Posterior vena cava (tissue), 2 donors: ENCODE measurements at regions of chr10 and their contacts with region 1.

Region 1: DNA sequence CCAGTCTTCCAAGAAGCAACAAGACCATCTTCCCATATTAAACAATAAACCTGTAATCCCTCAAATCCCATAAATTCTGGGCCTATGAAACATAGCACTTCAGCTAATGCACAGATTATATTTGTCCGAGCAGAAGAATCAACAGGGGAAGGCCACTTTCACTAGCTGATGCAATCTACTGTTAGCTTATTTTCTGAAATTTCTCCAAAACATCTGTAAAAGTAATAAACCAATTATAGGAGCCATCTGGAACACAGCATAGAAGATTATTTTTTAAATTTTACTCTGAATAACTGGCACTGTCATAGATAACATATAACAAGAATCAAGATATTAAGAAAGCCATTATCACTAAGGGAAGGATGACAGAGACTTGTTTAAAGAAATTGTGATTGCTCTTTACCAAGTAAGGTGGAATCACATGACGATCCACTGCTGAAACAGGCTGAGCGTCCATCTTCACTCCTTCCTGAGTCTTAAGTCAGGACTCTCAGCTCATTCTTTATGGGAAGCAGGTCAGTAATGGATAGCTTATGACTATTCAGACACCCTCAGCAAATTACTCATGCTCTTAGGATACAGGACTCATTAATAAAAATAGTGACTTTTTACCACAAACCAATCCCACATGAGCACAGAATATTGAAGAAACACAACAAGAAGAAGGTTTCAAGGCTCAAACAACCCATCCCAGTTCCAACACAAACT is 719.5 kb downstream of the XPNPEP1 start:
- DNase-seq: no peak

Region 2: DNA sequence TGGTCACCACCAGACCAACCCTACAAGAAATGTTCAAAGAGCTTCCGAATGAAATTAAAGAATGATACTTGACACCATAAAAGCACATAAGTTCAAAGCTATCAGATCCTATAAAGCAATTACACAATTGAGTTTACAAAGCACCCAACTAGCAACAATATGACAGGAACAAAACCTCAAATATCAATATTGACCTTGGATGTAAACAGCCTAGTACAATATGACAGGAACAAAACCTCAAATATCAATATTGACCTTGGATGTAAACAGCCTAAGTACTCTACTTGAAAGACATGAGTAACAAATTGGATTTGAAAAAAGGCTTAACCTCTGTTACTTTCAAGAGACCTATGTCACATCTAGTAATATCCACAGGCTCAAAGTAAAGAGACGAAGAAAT is 481.9 kb before region 1 on chr10:
- intact Hi-C with region 1: no loop called
- DNase-seq: no peak

Region 3: DNA sequence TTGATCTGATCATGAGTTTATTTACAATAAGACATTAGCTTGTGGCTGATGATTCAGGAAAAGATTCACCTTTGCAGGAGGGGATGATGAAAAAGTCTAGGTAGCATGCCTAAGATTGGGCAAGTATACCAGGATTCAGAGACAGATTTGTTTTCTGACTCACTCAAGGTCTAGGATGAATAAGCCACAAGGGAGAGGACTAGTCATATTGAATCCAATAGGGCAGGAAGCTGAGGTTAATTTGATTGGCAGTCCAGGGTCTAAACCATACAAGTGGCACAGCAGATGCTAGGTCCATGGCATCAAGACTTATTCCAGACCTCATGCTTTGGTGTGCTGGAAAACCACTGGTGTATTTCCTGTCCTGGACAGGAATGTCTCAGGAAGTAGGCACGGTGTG is 413.9 kb before region 1 on chr10:
- intact Hi-C with region 1: loop called in 1 of 2 experiments (anchors 5 kb)
- DNase-seq: no peak

Region 4: DNA sequence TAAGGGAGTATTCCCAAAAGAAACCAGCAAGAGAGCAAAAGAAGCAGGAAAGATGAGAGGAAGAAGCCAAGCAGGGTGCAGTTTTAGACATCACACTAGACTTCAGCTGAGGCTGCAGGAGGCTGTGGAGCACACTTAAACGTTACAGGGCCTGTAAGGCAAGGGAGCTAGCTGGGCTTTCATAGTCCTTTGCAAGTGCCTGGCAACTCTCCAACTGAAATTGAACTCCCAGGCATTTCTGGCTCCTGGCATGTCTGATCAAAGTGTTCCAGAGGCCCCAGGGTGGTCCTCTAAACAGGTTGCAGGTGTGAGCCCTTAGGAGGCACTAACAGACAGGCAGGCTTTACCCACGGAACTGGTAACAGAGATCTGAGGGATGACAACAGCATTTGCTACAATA is 30.7 kb before region 1 on chr10:
- intact Hi-C with region 1: no loop called
- DNase-seq: no peak

Region 5: GRCh38 chr10:109556399-109556798 is 352.6 kb after region 1 on chr10:
- intact Hi-C with region 1: no loop called
- DNase-seq: no peak